Ovary (tissue), 10 donors: ENCODE measurements at regions of chr9 and their contacts with region 1.

Region 1: DNA sequence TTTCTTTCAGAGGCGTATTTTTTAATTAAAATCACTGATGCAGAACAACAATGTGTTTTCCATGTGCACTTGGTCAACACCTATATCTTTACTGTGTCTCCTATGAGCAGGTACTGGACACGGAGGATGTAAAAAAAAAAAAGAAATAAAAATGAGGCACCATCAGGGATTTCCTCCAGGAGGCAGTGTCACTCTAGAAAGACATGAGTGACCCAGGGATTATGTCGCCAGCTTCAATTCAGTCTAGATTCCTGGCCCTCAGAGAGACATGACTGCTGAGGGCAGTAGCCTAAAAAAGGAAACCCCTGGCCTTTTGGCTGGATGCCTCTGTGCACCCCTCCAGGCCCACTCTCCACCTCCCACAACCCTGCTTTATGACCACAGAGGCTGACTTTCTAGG is 18.3 kb upstream of the IL33 start:
- DNase-seq: no peak
- H3K4me3 ChIP-seq: no peak overlapping the region
- H3K27ac ChIP-seq: no peak overlapping the region
- H3K4me1 ChIP-seq: no peaks in the 10 kb centered on the region
- H3K27me3 ChIP-seq: no peaks in the 10 kb centered on the region
- CTCF ChIP-seq: no peak
- EP300 ChIP-seq: no peak
- POLR2A ChIP-seq: no peak

Region 2: DNA sequence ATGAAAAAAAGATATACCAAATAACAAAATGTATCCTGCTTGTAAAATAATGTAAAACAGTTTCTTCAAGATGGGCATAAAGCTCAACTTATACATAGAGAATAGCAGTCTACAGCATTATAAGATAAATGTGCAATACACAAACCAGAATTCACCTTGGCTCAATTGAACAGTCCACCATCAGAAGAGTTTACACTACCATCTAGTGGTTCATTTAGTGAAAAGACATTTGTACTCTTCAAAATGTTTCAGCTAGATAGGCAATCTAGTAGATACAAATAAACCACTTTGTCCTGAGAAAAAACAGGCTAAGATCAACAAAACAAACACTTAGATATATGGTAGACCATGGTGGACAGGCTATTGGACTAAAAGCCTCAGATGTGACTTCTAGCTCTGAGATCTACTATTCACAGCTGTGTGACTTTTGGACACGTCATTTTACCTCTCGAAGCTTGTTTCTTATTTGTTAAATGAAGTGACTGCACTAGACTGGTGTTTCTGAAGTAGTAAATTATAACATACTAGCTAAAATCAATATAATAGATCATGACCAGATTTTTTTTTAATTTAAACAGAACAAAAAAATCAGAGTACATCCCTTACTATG is 108.7 kb after region 1 on chr9:
- intact Hi-C with region 1: loop called in 2 of 4 experiments (anchors 2 to 10 kb)
- DNase-seq: no peak
- H3K4me3 ChIP-seq: no peak overlapping the region
- H3K27ac ChIP-seq: no peak overlapping the region
- H3K4me1 ChIP-seq: no peaks in the 10 kb centered on the region
- H3K27me3 ChIP-seq: no peaks in the 10 kb centered on the region
- CTCF ChIP-seq: peak in 1 of 3 donors; percentile 73
- EP300 ChIP-seq: no peak
- POLR2A ChIP-seq: no peak